Sigmoid colon (tissue), 7 donors: ENCODE measurements at regions of chr2 and their contacts with region 1.

Region 1: GRCh38 chr2:73176881-73177644 is 25.3 kb upstream of the NOTO start:
- DNase-seq: peak; percentile 95
- H3K4me3 ChIP-seq: peak overlapping the region; percentile 39 to 60 (median 51)
- H3K27ac ChIP-seq: peak overlapping the region; percentile 66 to 79 (median 71)
- H3K4me1 ChIP-seq: peaks cover 0 to 29% (median 27%) of the 10 kb centered on the region in 4 donors
- H3K27me3 ChIP-seq: peaks cover 6 to 71% (median 7%) of the 10 kb centered on the region in 3 donors
- CTCF ChIP-seq: peak; percentile 94 to 100 (median 98)
- EP300 ChIP-seq: no peak
- POLR2A ChIP-seq: no peak

Region 2: DNA sequence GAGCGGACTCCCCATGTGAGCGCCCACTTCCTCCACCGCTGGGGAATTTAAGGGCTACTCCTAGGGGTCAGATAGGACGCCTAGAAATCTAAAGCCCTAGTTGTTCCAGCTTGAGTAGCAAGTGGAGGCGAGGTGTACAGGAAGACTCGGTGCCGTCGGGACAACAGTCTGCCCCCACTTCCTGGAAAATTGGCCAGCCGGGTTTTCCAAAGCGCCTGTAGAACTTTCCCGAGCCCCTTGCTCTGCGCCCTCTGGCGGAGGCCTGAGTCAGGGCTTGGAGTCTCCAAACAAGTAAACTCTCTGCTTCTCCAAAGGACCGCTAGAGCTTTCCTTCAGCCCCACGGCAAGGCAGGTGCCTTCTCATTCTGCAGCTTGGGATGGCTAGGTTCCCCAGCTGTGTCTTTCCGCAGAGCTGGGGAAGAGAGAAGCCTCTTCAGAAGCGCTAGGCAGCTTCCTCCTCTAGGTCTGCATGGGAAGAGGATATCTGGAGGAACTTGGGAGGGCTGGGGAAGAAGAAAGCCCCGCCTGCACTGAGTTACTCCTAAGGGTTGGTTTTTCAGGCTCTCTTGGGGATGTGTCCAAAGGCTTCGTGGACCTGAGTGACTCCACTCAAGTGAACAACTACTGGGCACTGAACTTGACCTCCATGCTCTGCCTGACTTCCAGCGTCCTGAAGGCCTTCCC is 289.2 kb before region 1 on chr2:
- intact Hi-C with region 1: loop called (anchors 5 kb)
- DNase-seq: peak; percentile 95
- H3K4me3 ChIP-seq: peak overlapping the region; percentile 44 to 92 (median 72)
- H3K27ac ChIP-seq: peak overlapping the region; percentile 84 to 91 (median 90)
- H3K4me1 ChIP-seq: peaks cover 0 to 33% (median 28%) of the 10 kb centered on the region in 4 donors
- H3K27me3 ChIP-seq: no peaks in the 10 kb centered on the region
- CTCF ChIP-seq: peak; percentile 56 to 92 (median 82)
- EP300 ChIP-seq: no peak
- POLR2A ChIP-seq: no peak

Region 3: GRCh38 chr2:73071360-73072133 is 105.5 kb before region 1 on chr2 and contains the start of gene SFXN5:
- intact Hi-C with region 1: loop called (anchors 1 kb)
- DNase-seq: peak; percentile 99
- H3K4me3 ChIP-seq: peak within 1 kb of the TSS; percentile 67 to 90 (median 78)
- H3K27ac ChIP-seq: peak within 1 kb of the TSS; percentile 87 to 96 (median 93)
- H3K4me1 ChIP-seq: peaks cover 0 to 37% (median 29%) of the 10 kb centered on the region in 4 donors
- H3K27me3 ChIP-seq: no peaks in the 10 kb centered on the region
- CTCF ChIP-seq: peak in 1 of 4 experiments; percentile 26
- EP300 ChIP-seq: no peak
- POLR2A ChIP-seq: peak in 1 of 2 donors; percentile 4
- total RNA-seq, gene SFXN5: 6.7 to 27.1 (median 10.4) TPM

Region 4: DNA sequence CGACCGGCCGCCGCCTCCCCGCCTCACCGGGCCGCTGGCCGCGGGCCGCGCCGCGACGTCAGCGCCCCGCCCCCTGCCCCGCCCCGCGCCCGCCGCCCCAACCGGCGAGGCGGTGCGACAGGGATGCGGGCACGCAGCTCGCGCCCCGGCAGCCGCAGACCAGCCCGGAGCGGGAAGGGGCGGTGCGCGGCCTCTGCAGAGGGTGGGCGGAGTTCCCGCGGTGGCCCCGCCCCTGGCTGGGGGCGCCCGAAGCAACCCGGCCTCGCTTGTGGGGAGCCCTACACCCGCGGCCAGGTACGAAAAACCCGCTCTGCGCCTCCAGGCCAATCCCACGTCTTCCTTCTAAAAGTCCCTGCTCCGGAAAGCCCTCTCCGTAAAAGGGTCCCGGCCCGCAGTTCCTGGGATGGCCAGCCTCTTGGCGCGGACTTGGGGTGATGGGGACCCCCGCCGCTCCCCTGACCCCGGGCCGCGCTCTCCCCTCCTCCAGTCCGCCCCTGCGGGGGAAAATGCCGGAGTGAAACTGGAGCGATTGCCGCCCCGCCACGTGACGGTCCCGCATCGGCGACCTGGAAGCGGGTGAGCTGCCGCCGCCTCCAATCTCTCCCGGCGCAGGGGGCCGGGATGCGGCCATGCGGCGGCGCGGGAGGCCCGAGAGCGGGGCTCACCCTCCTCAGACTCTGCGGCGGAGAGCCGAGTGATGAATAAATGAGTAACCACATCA is 64.0 kb before region 1 on chr2 and contains the start of gene RAB11FIP5:
- intact Hi-C with region 1: loop called (anchors 1 kb)
- DNase-seq: peak; percentile 90
- H3K4me3 ChIP-seq: peak within 1 kb of the TSS; percentile 60 to 92 (median 84)
- H3K27ac ChIP-seq: peak within 1 kb of the TSS; percentile 88 to 97 (median 92)
- H3K4me1 ChIP-seq: peaks cover 0 to 44% (median 33%) of the 10 kb centered on the region in 4 donors
- H3K27me3 ChIP-seq: no peaks in the 10 kb centered on the region
- CTCF ChIP-seq: peak in 1 of 4 experiments; percentile 16
- EP300 ChIP-seq: no peak
- POLR2A ChIP-seq: no peak
- total RNA-seq, gene RAB11FIP5: 13.9 to 24.4 (median 19.4) TPM